ENCODE measurements at regions of chr4 and their contacts with region 1.

Region 1: DNA sequence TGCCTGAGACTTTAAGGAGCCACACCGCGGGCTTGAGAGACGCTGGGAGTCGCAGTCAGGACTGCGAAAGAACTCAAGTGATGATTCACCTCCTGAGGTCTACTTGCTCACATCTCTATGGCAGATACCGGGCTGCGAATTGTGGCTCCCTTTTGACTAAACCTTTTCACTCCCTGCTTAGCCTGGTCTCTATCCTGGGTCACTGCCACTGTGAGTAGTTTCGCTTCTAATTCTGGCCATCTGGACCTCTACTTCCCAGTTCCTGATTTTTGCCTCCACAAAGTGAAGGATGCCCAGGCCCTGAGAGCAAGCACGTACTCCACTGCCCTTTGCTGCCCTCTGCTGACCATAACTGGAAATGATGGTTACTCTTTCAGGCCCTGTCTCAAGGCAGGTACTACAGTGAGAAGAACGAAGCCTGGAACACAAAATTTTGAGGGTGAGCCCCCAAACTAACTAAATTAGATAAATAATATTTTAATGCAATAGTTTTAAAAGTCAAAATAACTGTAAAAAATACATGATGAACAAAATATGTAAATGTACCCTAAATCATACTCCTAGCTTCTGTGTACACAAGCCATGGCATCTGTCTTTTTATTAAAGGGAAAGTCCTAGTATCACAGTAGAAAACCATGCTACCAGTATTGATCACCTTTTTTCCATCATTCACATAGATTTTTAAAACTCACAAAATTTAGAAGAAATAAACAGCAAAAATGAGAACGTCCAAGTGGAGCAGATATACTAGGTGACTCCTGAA is 16.7 kb downstream of the MAD2L1 start:
- DNase-seq: peak; percentile 80
- ATAC-seq: peak; percentile 94
- H3K4me3 ChIP-seq: no peak overlapping the region
- H3K4me3 Mint-ChIP-seq: no peak overlapping the region
- H3K27ac ChIP-seq: no peak overlapping the region
- H3K27ac Mint-ChIP-seq: no peak overlapping the region
- H3K4me1 ChIP-seq: peaks cover 3 to 13% of the 10 kb centered on the region in 2 donors
- H3K4me1 Mint-ChIP-seq: peaks cover 11% of the 10 kb centered on the region
- H3K27me3 ChIP-seq: no peaks in the 10 kb centered on the region
- H3K27me3 Mint-ChIP-seq: no peaks in the 10 kb centered on the region
- CTCF ChIP-seq: peak; percentile 91

Region 2: DNA sequence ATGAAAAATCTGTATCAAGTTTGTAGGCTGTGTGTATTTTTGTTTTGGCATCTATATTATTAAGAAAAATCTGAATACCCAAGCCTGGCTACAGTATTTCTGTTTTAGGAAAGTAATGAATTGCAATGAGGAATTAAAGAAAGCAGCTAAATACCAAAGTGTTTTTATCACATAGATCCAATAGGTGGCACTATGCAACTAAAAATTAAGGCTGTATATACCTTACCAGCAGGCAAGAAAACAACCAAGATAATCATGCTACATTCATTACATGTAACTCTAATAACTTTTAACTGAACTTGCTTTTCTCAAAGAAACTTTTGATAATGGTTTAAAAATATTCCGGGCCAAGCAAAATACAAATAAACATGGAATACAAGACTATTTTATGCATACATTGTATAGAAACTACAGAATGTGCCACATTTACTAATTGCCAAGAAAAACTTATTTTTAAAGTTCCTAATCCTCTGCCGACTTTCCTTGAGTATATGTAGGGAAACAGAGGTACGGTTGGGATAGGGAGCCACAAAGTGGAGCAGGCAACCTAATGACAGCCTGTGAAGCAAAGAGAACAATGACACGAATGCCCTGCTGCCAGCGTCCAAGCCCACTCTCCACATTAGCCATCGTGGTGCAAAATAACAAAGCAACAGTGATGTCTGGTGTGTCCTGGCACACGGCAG is 1277.7 kb before region 1 on chr4:
- CTCF ChIA-PET with region 1: no interaction called
- POLR2A ChIA-PET with region 1: no interaction called
- intact Hi-C with region 1: loop called (anchors 5 kb)
- DNase-seq: peak; percentile 60
- ATAC-seq: peak; percentile 65
- H3K4me3 ChIP-seq: no peak overlapping the region
- H3K4me3 Mint-ChIP-seq: no peak overlapping the region
- H3K27ac ChIP-seq: no peak overlapping the region
- H3K27ac Mint-ChIP-seq: no peak overlapping the region
- H3K4me1 ChIP-seq: no peaks in the 10 kb centered on the region
- H3K4me1 Mint-ChIP-seq: no peaks in the 10 kb centered on the region
- H3K27me3 ChIP-seq: no peaks in the 10 kb centered on the region
- H3K27me3 Mint-ChIP-seq: no peaks in the 10 kb centered on the region
- CTCF ChIP-seq: peak; percentile 85

Region 3: DNA sequence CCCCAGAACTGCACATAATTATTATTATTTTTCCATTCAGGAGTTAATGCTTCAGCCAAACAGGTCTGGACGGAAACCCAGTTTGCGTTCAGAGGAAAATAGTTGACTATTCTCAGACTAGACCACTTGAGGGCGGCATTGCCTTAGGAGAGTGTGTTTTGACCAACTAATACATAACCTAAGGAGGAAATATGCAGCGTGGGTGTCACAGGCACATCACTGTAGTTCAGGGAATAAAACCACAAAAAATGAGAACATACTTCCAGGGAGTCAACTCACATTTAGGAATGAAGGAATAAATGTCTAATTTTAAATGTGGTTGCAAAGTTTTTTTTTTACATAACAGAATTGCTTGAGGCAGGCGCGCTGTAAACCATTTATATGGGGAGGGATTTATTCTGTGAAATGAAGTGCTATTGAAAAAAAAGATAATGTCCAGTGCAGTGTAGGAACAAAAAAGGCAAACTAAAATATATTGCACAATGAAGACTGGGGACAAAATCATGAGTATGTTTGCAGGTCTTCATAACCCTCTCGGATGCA is 1068.0 kb before region 1 on chr4:
- CTCF ChIA-PET with region 1: interaction called, 13 read pairs
- POLR2A ChIA-PET with region 1: no interaction called
- intact Hi-C with region 1: loop called (anchors 1 kb)
- DNase-seq: peak; percentile 60
- ATAC-seq: peak; percentile 53
- H3K4me3 ChIP-seq: no peak overlapping the region
- H3K4me3 Mint-ChIP-seq: no peak overlapping the region
- H3K27ac ChIP-seq: no peak overlapping the region
- H3K27ac Mint-ChIP-seq: no peak overlapping the region
- H3K4me1 ChIP-seq: no peaks in the 10 kb centered on the region
- H3K4me1 Mint-ChIP-seq: peaks cover 2% of the 10 kb centered on the region
- H3K27me3 ChIP-seq: no peaks in the 10 kb centered on the region
- H3K27me3 Mint-ChIP-seq: peaks cover 13% of the 10 kb centered on the region
- CTCF ChIP-seq: peak; percentile 90

Region 4: GRCh38 chr4:119314356-119314755 is 735.6 kb before region 1 on chr4:
- CTCF ChIA-PET with region 1: interaction called, 6 read pairs
- POLR2A ChIA-PET with region 1: no interaction called
- intact Hi-C with region 1: loop called (anchors 1 kb)
- DNase-seq: peak; percentile 52
- ATAC-seq: peak; percentile 51
- H3K4me3 ChIP-seq: no peak overlapping the region
- H3K4me3 Mint-ChIP-seq: no peak overlapping the region
- H3K27ac ChIP-seq: no peak overlapping the region
- H3K27ac Mint-ChIP-seq: no peak overlapping the region
- H3K4me1 ChIP-seq: no peaks in the 10 kb centered on the region
- H3K4me1 Mint-ChIP-seq: no peaks in the 10 kb centered on the region
- H3K27me3 ChIP-seq: peaks cover 0 to 6% (median 0%) of the 10 kb centered on the region in 4 experiments
- H3K27me3 Mint-ChIP-seq: peaks cover 15% of the 10 kb centered on the region
- CTCF ChIP-seq: peak; percentile 61

Region 5: GRCh38 chr4:119559044-119559647 is 490.8 kb before region 1 on chr4:
- CTCF ChIA-PET with region 1: interaction called, 4 read pairs
- POLR2A ChIA-PET with region 1: no interaction called
- intact Hi-C with region 1: loop called (anchors 1 kb)
- DNase-seq: peak; percentile 7
- ATAC-seq: no peak
- H3K4me3 ChIP-seq: no peak overlapping the region
- H3K4me3 Mint-ChIP-seq: no peak overlapping the region
- H3K27ac ChIP-seq: no peak overlapping the region
- H3K27ac Mint-ChIP-seq: no peak overlapping the region
- H3K4me1 ChIP-seq: no peaks in the 10 kb centered on the region
- H3K4me1 Mint-ChIP-seq: no peaks in the 10 kb centered on the region
- H3K27me3 ChIP-seq: no peaks in the 10 kb centered on the region
- H3K27me3 Mint-ChIP-seq: no peaks in the 10 kb centered on the region
- CTCF ChIP-seq: peak; percentile 38

Region 6: GRCh38 chr4:119628308-119629141 is 421.4 kb before region 1 on chr4 and contains the start of gene PDE5A:
- CTCF ChIA-PET with region 1: interaction called, 9 read pairs
- POLR2A ChIA-PET with region 1: no interaction called
- intact Hi-C with region 1: loop called (anchors 1 kb)
- DNase-seq: peak; percentile 86
- ATAC-seq: peak; percentile 80
- H3K4me3 ChIP-seq: peak within 1 kb of the TSS; percentile 42 to 77 (median 63)
- H3K4me3 Mint-ChIP-seq: peak within 1 kb of the TSS; percentile 87
- H3K27ac ChIP-seq: peak within 1 kb of the TSS; percentile 40 to 51
- H3K27ac Mint-ChIP-seq: peak within 1 kb of the TSS; percentile 47
- H3K4me1 ChIP-seq: peaks cover 18 to 26% of the 10 kb centered on the region in 2 donors
- H3K4me1 Mint-ChIP-seq: peaks cover 26% of the 10 kb centered on the region
- H3K27me3 ChIP-seq: peaks cover 0 to 26% (median 11%) of the 10 kb centered on the region in 4 experiments
- H3K27me3 Mint-ChIP-seq: peaks cover 14% of the 10 kb centered on the region
- CTCF ChIP-seq: peak; percentile 78
- total RNA-seq, gene PDE5A: 1.4 and 2.6 TPM in 2 replicates

Region 7: GRCh38 chr4:120062663-120063195 is 12.8 kb after region 1 on chr4:
- CTCF ChIA-PET with region 1: interaction called, 16 read pairs
- POLR2A ChIA-PET with region 1: no interaction called
- intact Hi-C with region 1: no loop called
- DNase-seq: no peak
- ATAC-seq: no peak
- H3K4me3 ChIP-seq: no peak overlapping the region
- H3K4me3 Mint-ChIP-seq: no peak overlapping the region
- H3K27ac ChIP-seq: no peak overlapping the region
- H3K27ac Mint-ChIP-seq: no peak overlapping the region
- H3K4me1 ChIP-seq: peaks cover 9 to 10% of the 10 kb centered on the region in 2 donors
- H3K4me1 Mint-ChIP-seq: peaks cover 18% of the 10 kb centered on the region
- H3K27me3 ChIP-seq: no peaks in the 10 kb centered on the region
- H3K27me3 Mint-ChIP-seq: no peaks in the 10 kb centered on the region
- CTCF ChIP-seq: no peak